ENCODE measurements at regions of chrX and their contacts with region 1.

Region 1: GRCh38 chrX:112043997-112044396 is 38.6 kb downstream of the TRPC5 start:
- DNase-seq: peak; percentile 42
- H3K4me3 Mint-ChIP-seq: no peak overlapping the region
- H3K27ac Mint-ChIP-seq: no peak overlapping the region
- H3K4me1 Mint-ChIP-seq: no peaks in the 10 kb centered on the region
- H3K27me3 Mint-ChIP-seq: peaks cover 77% of the 10 kb centered on the region
- CTCF ChIP-seq: peak; percentile 39

Region 2: DNA sequence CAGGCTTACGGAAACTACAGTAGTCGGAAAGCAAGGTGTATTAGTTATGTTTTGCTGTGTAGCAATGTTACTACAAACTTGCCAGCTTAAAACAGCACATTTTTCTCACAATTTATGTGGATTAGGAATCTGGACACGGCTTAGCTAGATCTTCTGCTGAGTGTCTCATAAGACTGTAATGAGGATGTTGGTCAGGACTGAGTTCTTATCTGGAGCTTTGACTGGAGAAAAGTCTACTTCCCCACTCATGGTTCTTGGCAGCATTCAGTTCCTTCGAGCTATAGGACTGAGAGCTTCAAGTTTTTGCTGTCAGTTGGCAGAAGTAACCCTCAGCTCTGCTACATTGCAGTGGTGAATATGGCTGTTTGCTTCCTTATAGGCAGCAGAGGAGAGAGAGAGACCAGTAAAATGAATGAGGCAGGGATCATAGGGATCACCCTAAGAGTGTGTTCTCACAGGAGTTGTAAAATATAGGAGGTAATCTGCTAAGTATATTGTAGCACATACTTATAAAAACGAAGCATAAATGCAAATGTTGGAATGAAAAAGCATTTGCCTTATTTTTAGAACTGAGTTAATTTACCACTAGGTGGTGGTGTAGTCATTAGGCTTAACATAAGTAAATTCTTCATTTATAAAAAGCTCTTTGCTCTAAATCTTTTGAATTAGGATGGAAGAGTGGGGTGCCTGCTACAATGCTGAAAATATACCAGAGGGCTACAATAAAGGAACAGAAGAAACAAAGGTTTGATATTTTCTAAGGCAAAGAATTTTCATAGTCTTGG is 324.4 kb before region 1 on chrX:
- CTCF ChIA-PET with region 1: interaction called, 10 read pairs
- POLR2A ChIA-PET with region 1: no interaction called
- intact Hi-C with region 1: loop called (anchors 1 kb)
- DNase-seq: peak; percentile 3
- H3K4me3 Mint-ChIP-seq: no peak overlapping the region
- H3K27ac Mint-ChIP-seq: no peak overlapping the region
- H3K4me1 Mint-ChIP-seq: peaks cover 5% of the 10 kb centered on the region
- H3K27me3 Mint-ChIP-seq: peaks cover 35% of the 10 kb centered on the region
- CTCF ChIP-seq: peak; percentile 39

Region 3: DNA sequence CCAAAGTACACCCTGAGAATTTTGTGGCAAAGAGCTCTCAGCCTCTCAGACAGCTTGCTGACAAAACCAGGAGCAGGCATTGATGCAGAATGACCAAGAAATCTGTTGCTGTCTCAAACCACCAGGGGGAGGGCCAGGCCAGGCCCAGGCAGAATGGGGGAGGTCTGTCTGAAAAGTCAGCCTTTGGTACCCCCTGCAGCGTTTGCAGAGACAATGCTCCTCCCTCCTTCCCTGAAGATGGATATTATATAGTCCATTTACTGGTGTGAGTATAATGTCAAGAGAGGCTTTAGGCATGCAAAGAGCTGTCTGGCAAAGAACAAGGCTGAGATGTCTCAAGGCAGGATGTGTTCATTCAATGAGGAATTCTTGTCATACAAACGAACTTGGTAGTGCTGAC is 220.9 kb before region 1 on chrX:
- CTCF ChIA-PET with region 1: interaction called, 3 read pairs
- POLR2A ChIA-PET with region 1: no interaction called
- intact Hi-C with region 1: loop called (anchors 2 kb)
- DNase-seq: peak; percentile 14
- H3K4me3 Mint-ChIP-seq: no peak overlapping the region
- H3K27ac Mint-ChIP-seq: no peak overlapping the region
- H3K4me1 Mint-ChIP-seq: no peaks in the 10 kb centered on the region
- H3K27me3 Mint-ChIP-seq: peaks cover 65% of the 10 kb centered on the region
- CTCF ChIP-seq: peak; percentile 42

Region 4: DNA sequence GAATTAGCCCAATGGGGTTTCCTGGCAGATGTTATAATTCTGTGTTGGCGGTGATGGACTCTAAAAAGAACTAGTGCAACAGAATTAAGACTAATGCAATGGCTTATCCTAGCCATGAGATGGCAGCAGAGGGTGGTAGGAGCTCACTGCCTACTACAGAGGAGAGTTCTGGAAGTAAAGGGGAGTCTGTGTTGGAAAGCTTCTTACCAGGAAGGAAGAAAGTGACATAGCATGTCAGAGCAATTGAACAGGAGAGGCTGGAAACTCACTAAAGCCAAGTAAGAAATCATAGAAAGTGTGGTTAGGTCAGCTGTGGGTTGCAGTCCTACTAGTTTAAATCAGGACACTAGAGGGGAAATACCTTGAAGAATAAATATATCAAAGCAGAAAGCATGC is 174.4 kb before region 1 on chrX:
- CTCF ChIA-PET with region 1: interaction called, 41 read pairs
- POLR2A ChIA-PET with region 1: no interaction called
- intact Hi-C with region 1: loop called (anchors 1 kb)
- DNase-seq: peak; percentile 61
- H3K4me3 Mint-ChIP-seq: no peak overlapping the region
- H3K27ac Mint-ChIP-seq: no peak overlapping the region
- H3K4me1 Mint-ChIP-seq: peaks cover 6% of the 10 kb centered on the region
- H3K27me3 Mint-ChIP-seq: peaks cover 59% of the 10 kb centered on the region
- CTCF ChIP-seq: peak; percentile 60

Region 5: GRCh38 chrX:112147206-112147605 is 103.2 kb after region 1 on chrX:
- CTCF ChIA-PET with region 1: interaction called, 3 read pairs
- POLR2A ChIA-PET with region 1: no interaction called
- intact Hi-C with region 1: loop called (anchors 5 kb)
- DNase-seq: peak; percentile 49
- H3K4me3 Mint-ChIP-seq: no peak overlapping the region
- H3K27ac Mint-ChIP-seq: no peak overlapping the region
- H3K4me1 Mint-ChIP-seq: no peaks in the 10 kb centered on the region
- H3K27me3 Mint-ChIP-seq: peaks cover 42% of the 10 kb centered on the region
- CTCF ChIP-seq: peak; percentile 54

Region 6: GRCh38 chrX:112368373-112368772 is 324.4 kb after region 1 on chrX:
- CTCF ChIA-PET with region 1: no interaction called
- POLR2A ChIA-PET with region 1: no interaction called
- intact Hi-C with region 1: loop called (anchors 5 kb)
- DNase-seq: peak; percentile 18
- H3K4me3 Mint-ChIP-seq: no peak overlapping the region
- H3K27ac Mint-ChIP-seq: no peak overlapping the region
- H3K4me1 Mint-ChIP-seq: no peaks in the 10 kb centered on the region
- H3K27me3 Mint-ChIP-seq: peaks cover 63% of the 10 kb centered on the region
- CTCF ChIP-seq: peak; percentile 48

Measured in MCF 10A (cell line).